ENCODE measurements at regions of chr17 and their contacts with region 1.

Region 1: DNA sequence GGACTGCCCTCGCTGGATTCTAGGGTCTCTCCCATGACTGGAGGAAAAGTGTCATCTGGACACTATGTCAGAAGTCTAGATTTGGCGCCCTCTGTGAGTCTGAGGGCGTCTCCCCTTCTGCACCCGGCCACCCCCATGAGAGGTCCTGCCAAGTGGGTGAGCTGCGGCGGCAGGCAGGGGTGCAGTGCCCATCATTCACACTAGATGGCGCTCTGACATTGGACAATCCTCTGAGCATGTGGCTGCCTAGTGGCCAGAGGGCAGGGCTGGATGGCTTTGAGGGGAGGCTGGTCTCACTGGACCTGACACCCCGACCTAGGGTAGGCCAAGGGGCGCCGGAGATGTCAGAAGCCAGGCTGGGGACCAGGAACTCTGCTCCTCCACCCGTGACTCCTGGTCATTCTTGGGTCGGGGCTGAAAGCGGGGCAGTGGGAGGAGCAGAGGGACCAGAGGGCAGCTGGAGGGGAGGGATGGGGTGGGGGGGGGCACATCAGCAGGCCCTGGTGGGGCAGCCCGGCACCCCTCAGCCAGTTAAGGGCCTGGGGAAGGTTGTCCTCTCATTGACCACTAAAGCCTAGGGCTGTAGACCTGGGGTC is 28.0 kb downstream of the MRM1 start:
- DNase-seq: peak; percentile 71 to 75
- ATAC-seq: peak; percentile 75 to 92 (median 90)
- H3K4me3 ChIP-seq: no peak overlapping the region
- H3K27ac ChIP-seq: no peak overlapping the region
- H3K4me1 ChIP-seq: peaks cover 0 to 17% (median 0%) of the 10 kb centered on the region in 9 donors
- H3K27me3 ChIP-seq: peaks cover 0 to 31% (median 14%) of the 10 kb centered on the region in 7 donors
- CTCF ChIP-seq: peak; percentile 96 to 99 (median 98)

Region 2: DNA sequence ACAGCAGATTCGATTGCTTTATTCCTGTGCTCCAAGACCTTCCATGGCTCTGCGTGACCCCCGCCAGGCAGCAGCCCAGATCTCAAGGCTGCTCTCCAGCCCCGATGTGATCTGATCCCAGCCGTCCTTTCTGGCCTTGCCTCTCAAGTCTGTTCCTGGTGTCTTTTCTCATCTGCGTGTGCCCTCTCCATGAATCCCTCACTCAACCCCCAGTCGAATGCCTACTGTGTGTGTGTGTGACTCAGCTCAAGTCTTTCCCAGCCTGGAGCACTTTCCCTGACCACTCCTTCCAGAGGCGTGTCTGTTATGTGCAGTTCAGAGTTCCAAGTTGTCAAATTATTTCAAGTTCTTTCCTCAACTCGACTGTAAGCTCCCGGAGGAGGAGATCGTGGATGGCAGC is 36.1 kb after region 1 on chr17:
- intact Hi-C with region 1: no loop called
- DNase-seq: no peak
- ATAC-seq: no peak
- H3K4me3 ChIP-seq: no peak overlapping the region
- H3K27ac ChIP-seq: no peak overlapping the region
- H3K4me1 ChIP-seq: no peaks in the 10 kb centered on the region
- H3K27me3 ChIP-seq: peaks cover 0 to 72% (median 35%) of the 10 kb centered on the region in 7 donors
- CTCF ChIP-seq: no peak

Region 3: GRCh38 chr17:37047631-37048104 is 418.3 kb after region 1 on chr17:
- intact Hi-C with region 1: loop called (anchors 1 to 5 kb)
- DNase-seq: peak; percentile 64 to 66
- ATAC-seq: peak in 6 of 8 donors; percentile 61 to 83 (median 70)
- H3K4me3 ChIP-seq: no peak overlapping the region
- H3K27ac ChIP-seq: no peak overlapping the region
- H3K4me1 ChIP-seq: no peaks in the 10 kb centered on the region
- H3K27me3 ChIP-seq: no peaks in the 10 kb centered on the region
- CTCF ChIP-seq: peak; percentile 77 to 92 (median 88)

Region 4: GRCh38 chr17:37212179-37212578 is 582.8 kb after region 1 on chr17:
- intact Hi-C with region 1: loop called in 1 of 10 experiments (anchors 10 kb)
- DNase-seq: no peak
- ATAC-seq: no peak
- H3K4me3 ChIP-seq: no peak overlapping the region
- H3K27ac ChIP-seq: no peak overlapping the region
- H3K4me1 ChIP-seq: peaks cover 0 to 11% (median 0%) of the 10 kb centered on the region in 9 donors
- H3K27me3 ChIP-seq: no peaks in the 10 kb centered on the region
- CTCF ChIP-seq: no peak

Region 5: GRCh38 chr17:37220607-37220953 is 591.2 kb after region 1 on chr17:
- intact Hi-C with region 1: loop called in 2 of 10 experiments (anchors 10 kb)
- DNase-seq: no peak
- ATAC-seq: no peak
- H3K4me3 ChIP-seq: no peak overlapping the region
- H3K27ac ChIP-seq: no peak overlapping the region
- H3K4me1 ChIP-seq: no peaks in the 10 kb centered on the region
- H3K27me3 ChIP-seq: no peaks in the 10 kb centered on the region
- CTCF ChIP-seq: peak in 5 of 9 donors; percentile 14 to 44 (median 33)

Region 6: DNA sequence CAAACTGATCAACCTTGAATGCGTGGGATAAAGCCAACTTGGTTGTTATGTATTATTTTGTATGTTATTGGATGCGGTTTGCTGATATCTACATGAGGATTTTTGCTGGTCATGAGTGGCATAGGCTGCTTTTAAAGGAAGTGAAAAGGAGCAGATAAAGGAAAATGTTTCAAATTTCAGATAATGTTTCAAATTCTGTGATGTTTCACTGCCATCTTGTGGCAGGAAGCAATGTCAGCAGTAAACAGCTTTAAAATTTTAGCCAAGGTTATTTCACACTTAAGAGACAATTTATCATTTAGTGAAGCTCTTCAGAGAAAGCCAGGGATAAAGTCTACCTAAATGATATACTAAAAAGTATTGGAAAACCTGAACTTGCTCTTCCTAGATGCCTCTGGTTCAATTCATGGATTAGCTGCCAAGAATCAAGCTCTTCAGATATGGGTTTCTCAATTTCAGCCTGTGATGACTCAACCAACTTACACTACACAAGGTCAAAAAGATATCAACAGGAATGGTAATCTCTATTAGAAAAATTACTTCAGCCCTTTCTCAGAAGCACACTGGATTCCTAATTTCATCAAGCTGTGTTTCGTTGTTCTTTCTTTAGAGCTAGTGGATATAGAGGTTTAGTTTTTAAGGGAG is 610.5 kb after region 1 on chr17:
- intact Hi-C with region 1: loop called in 6 of 10 experiments (anchors 5 to 10 kb)
- DNase-seq: no peak
- ATAC-seq: peak in 3 of 8 donors; percentile 11 to 71 (median 47)
- H3K4me3 ChIP-seq: no peak overlapping the region
- H3K27ac ChIP-seq: no peak overlapping the region
- H3K4me1 ChIP-seq: peaks cover 0 to 7% (median 0%) of the 10 kb centered on the region in 9 donors
- H3K27me3 ChIP-seq: no peaks in the 10 kb centered on the region
- CTCF ChIP-seq: peak in 8 of 9 donors; percentile 27 to 71 (median 64)

Measured in heart right ventricle (tissue), 16 donors.